ENCODE measurements at regions of chr11 and their contacts with region 1.

Region 1: GRCh38 chr11:5878564-5878963 is 1.9 kb upstream of the OR52E4 start:
- H3K4me3 Mint-ChIP-seq: no peak overlapping the region
- H3K27ac Mint-ChIP-seq: no peak overlapping the region
- H3K4me1 Mint-ChIP-seq: no peaks in the 10 kb centered on the region
- H3K27me3 Mint-ChIP-seq: no peaks in the 10 kb centered on the region

Region 2: GRCh38 chr11:5460983-5461621 is 417.5 kb before region 1 on chr11:
- intact Hi-C with region 1: loop called (anchors 10 kb)
- H3K4me3 Mint-ChIP-seq: no peak overlapping the region
- H3K27ac Mint-ChIP-seq: no peak overlapping the region
- H3K4me1 Mint-ChIP-seq: no peaks in the 10 kb centered on the region
- H3K27me3 Mint-ChIP-seq: no peaks in the 10 kb centered on the region

Measured in dendritic cell treated with granulocyte-macrophage colony-stimulating factor and Interleukin-4, amounts not matched to agents 40 ng/mL and 50 ng/mL, for 4 days (primary cell).